ENCODE measurements at regions of chr3 and their contacts with region 1.

Region 1: DNA sequence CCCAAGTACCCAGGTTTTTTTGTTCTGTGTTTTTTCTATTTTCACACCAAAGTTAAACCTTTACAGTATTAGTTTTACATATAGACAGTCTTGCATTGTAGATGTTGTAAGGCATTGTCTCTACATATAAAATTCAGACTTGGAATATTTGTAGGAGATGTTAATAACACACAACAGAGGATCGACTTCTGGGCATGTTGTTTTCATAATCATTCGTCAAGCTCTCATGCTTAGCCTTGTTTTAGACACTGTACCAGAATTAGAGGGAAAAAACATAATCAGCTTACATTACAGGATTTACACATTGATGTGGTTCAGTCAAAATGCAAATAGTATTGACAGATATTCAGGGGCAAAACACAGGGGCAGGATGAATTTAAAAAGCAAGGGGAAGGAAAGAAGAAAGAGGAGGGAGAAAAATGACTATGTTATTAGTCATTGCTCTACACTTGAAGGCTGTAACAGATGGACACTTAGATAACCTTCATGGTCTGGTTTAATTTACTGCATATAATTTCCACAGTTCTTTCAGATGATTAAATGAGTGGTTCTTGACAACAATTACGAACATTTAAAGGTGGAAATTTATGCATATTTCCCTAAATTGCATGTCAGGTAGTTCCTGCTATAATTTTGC is 7.5 kb downstream of the CMSS1 start:
- DNase-seq: no peak
- H3K4me3 ChIP-seq: no peak overlapping the region
- H3K27ac ChIP-seq: no peak overlapping the region
- H3K4me1 ChIP-seq: peaks cover 0 to 19% (median 3%) of the 10 kb centered on the region in 4 donors
- H3K27me3 ChIP-seq: no peaks in the 10 kb centered on the region
- CTCF ChIP-seq: no peak
- EP300 ChIP-seq: no peak
- POLR2A ChIP-seq: no peak

Region 2: DNA sequence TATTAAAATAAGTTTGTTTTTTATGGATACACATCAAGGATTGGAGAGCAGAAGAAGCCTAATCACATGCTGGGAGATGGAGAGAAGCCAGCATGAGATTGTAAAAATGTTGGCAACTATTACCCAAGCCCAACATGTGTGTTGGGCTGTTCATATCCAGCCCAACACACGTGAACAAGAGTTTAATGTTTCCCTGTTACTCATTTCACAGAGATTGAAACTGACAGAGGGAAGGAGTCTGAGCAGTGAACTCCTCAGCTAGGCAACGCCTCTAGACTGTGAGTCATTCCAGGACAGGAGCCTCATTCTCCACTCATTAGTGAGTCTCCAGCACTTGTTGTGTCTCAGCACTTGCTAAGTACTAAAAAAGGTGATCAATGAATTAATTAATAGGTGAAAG is 50.7 kb before region 1 on chr3:
- intact Hi-C with region 1: no loop called
- DNase-seq: no peak
- H3K4me3 ChIP-seq: no peak overlapping the region
- H3K27ac ChIP-seq: no peak overlapping the region
- H3K4me1 ChIP-seq: no peaks in the 10 kb centered on the region
- H3K27me3 ChIP-seq: no peaks in the 10 kb centered on the region
- CTCF ChIP-seq: no peak
- EP300 ChIP-seq: no peak
- POLR2A ChIP-seq: no peak

Region 3: DNA sequence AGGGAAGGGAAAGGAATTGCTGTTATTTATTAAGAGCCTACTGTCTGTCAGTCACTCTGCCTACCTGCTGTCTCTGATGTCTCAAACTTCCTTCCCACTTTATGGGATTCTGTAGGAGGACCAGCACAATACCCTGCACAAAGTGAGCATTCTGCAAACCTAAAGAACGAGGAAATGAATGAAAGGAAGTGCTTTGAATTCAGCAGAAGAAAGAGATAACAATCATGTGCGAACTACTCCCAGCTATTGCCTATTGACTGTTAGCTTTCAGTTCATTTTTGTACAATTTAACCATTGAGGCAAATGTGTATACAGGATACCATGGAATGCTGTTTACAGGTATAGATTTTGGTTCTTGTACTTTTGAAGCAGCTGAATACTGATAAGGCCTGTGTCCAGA is 59.4 kb after region 1 on chr3:
- intact Hi-C with region 1: no loop called
- DNase-seq: no peak
- H3K4me3 ChIP-seq: no peak overlapping the region
- H3K27ac ChIP-seq: peak overlapping the region in 3 of 4 donors; percentile 3 to 14 (median 7)
- H3K4me1 ChIP-seq: peaks cover 22 to 55% (median 35%) of the 10 kb centered on the region in 4 donors
- H3K27me3 ChIP-seq: no peaks in the 10 kb centered on the region
- CTCF ChIP-seq: no peak
- EP300 ChIP-seq: no peak
- POLR2A ChIP-seq: no peak

Region 4: DNA sequence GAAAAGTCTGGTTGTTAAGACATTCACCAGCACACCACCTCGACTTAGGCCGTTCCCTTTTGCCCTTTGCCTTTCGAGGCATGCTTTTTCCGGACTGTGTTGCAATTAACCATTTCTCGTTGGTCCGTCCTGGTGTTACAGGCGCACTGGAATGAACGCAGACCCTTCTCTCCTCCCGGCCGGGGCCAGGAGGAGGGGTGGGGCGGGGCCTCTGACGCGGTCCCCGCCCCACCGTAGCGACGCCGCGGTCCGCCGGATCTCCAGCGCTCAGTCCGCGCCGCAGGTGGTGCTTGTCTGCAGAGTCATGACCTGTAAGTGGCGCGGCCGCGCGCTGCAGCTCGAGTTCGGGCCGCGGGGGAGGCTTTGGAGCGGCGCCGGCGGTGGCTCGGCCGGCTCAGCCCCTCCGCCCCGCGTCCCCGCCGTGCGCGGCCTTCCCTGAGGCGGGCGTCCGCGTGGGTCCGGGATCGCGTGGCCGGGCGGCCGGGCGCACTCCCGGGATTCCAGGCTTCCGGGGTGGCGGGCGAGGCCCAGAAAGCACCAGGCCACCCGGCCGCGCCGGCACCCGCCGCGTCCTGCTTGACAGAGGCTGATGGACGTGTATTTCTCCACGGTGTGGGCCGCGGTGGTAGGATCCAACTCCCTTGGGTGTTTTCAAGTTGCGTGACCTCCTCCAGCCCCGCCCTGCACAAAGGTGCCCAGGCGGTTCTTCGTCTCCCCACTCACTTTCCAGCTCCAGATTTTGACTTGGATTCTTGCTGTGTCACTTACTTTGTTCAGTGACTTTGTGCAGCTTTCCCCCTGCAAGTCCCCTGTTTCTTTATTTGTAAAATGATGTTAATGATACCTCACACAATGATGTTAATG is 509.6 kb after region 1 on chr3 and contains the start of gene NIT2:
- intact Hi-C with region 1: loop called (anchors 10 kb)
- DNase-seq: peak; percentile 94
- H3K4me3 ChIP-seq: peak within 1 kb of the TSS; percentile 68 to 85 (median 74)
- H3K27ac ChIP-seq: peak within 1 kb of the TSS; percentile 80 to 91 (median 82)
- H3K4me1 ChIP-seq: peaks cover 9 to 20% (median 19%) of the 10 kb centered on the region in 4 donors
- H3K27me3 ChIP-seq: no peaks in the 10 kb centered on the region
- CTCF ChIP-seq: no peak
- EP300 ChIP-seq: no peak
- POLR2A ChIP-seq: no peak
- total RNA-seq, gene NIT2: 15.6 to 34.1 (median 18.5) TPM